ENCODE measurements at regions of chr20 and their contacts with region 1.

Region 1: GRCh38 chr20:50439539-50440453 is 70.4 kb upstream of the PTPN1 start:
- DNase-seq: no peak
- ATAC-seq: peak; percentile 4 to 8; a peak in 4 of 6 replicates
- H3K4me3 ChIP-seq: no peak overlapping the region
- H3K27ac ChIP-seq: peak overlapping the region; percentile 90 to 94
- H3K4me1 ChIP-seq: peaks cover 75% of the 10 kb centered on the region
- CTCF ChIP-seq: no peak
- EP300 ChIP-seq: no peak
- POLR2A ChIP-seq: no peak
- RAD21 ChIP-seq: no peak

Region 2: GRCh38 chr20:50450881-50451752 is 11.3 kb after region 1 on chr20:
- CTCF ChIA-PET with region 1: interaction called, 10 read pairs
- POLR2A ChIA-PET with region 1: no interaction called
- DNase-seq: peak in 1 of 2 experiments; percentile 57
- ATAC-seq: peak; percentile 80 to 83
- H3K4me3 ChIP-seq: no peak overlapping the region
- H3K27ac ChIP-seq: peak overlapping the region; percentile 91 to 94
- H3K4me1 ChIP-seq: peaks cover 39% of the 10 kb centered on the region
- CTCF ChIP-seq: no peak
- EP300 ChIP-seq: no peak
- POLR2A ChIP-seq: no peak
- RAD21 ChIP-seq: no peak